Activated T-helper 2 cell treated with anti-CD3 and anti-CD28 coated beads, Interferon-gamma antibody, Interleukin-2, Interleukin-4, amounts not matched to agents 10 μg/mL and 5 μg/mL and 100 μg/mL, durations not matched to agents 14 hours and 24 hours and 36 hours (primary cell): ENCODE measurements at regions of chr11 and their contacts with region 1.

Region 1: DNA sequence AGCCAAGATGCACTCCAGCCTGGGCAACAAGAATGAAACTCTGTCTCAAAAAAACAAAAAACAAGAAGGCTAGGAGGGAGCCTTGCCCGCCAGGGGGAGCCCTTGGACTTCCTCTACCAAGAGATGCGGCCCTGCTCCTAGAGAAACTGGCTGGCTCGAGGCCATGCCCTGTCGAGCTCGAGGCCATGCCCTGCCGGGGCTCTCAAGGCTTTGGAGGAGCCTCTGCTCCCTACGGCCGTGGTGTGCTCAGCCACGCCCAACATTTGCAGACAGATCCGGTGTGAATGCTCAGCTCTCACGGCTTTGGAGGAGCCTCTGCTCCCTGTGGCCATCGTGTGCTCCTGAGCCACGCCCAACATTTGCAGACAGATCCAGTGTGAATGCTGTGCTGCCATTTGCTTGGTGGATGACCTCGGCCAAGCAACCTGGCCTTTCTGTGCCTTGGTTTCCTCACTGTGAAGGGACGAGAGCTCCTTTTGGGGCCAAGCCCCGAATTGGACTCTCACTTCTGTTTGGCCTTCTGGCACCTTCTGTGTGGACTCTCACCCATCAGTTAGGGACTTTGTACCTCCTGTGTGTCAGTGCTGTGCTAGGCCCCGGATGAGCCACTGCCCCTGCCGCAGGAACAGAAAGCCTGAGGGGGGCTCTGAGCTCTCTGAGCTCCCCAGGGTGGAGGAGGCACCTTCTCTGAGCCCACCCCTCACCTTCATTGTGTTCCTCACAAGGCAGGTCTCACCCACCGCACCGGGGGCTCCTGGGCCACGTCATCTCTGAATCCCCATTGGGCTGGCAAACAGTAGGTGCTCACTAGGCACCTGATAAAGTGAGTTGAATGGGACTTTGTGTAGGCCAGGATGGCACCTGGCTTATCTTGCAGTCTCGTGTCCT is 14.1 kb downstream of the C11orf24 start:
- DNase-seq: peak; percentile 84
- H3K4me3 Mint-ChIP-seq: no peak overlapping the region
- H3K27ac Mint-ChIP-seq: no peak overlapping the region
- H3K4me1 Mint-ChIP-seq: peaks cover 1% of the 10 kb centered on the region
- H3K27me3 Mint-ChIP-seq: no peaks in the 10 kb centered on the region

Region 2: DNA sequence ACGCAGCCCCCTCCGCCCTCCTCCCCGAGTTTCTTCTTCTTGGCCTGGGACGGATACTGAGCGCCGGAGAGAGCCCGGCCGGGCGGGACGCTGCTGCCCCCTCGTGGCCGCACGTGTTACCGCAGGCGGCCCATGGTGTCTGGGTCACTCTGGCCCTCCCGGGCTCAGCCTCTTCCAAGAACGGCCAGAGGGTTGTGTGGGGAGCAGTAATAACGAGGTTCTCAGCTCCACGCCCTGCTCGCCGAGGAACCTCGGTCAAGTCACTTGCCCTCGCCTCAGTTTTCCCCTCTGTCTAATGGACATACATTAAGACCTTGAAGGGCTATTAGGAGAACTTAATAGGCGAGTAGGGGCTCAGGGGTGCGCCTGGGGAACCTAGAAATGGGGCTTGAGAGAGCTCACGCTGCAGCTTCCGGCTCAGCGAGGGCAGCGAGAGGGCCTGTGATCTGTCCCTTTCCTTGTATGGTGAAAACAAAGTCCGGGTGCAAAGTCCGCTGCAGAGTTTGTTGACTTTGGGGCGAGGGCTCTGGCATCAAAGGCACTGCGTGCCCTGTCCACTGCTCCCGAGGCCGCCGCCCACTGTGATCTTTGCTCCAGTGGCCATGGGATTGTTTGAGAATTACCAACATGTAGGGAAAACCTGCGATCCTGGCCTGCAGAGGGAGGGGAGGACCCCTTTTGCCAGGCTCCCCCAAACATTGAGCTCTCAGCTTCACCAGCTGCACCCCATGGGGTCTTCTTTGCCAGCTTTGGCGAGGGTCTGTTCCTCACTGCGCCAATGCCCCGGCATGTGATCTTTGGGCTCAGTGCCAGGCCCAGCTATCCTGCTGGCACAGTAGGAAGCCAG is 40.3 kb after region 1 on chr11:
- intact Hi-C with region 1: loop called (anchors 1 kb)
- DNase-seq: peak; percentile 54
- H3K4me3 Mint-ChIP-seq: no peak overlapping the region
- H3K27ac Mint-ChIP-seq: no peak overlapping the region
- H3K4me1 Mint-ChIP-seq: no peaks in the 10 kb centered on the region
- H3K27me3 Mint-ChIP-seq: peaks cover 7% of the 10 kb centered on the region

Region 3: DNA sequence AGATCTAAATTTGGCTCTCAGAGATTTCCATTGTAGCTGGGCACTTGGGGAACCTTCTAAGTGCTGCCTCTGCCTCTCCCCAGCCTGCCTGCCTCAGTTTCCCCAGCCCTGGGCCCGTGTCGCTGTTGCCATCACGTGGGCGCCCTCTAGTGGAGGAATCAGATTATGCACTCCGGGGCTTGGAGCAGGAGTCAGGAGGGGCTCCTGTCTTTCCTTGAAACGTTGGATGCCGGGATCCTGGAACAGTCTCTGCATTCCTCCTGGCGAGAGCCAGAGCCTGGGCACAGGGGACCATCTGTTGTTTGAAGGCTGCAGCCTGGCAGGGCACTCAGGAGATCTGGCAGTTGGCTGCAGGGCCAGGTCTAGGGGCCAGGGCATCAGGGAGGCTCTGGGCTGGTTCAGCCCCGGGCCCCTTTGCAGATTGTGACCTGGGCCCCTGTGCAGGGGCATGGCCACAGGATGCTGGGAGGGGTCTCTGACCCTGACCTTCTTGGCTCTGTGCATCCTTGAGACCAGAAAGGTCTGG is 126.3 kb after region 1 on chr11:
- intact Hi-C with region 1: loop called (anchors 1 kb)
- DNase-seq: peak; percentile 50
- H3K4me3 Mint-ChIP-seq: no peak overlapping the region
- H3K27ac Mint-ChIP-seq: no peak overlapping the region
- H3K4me1 Mint-ChIP-seq: peaks cover 20% of the 10 kb centered on the region
- H3K27me3 Mint-ChIP-seq: peaks cover 2% of the 10 kb centered on the region

Region 4: GRCh38 chr11:68447015-68447801 is 189.5 kb after region 1 on chr11:
- intact Hi-C with region 1: loop called (anchors 1 kb)
- DNase-seq: peak; percentile 63
- H3K4me3 Mint-ChIP-seq: no peak overlapping the region
- H3K27ac Mint-ChIP-seq: no peak overlapping the region
- H3K4me1 Mint-ChIP-seq: peaks cover 6% of the 10 kb centered on the region
- H3K27me3 Mint-ChIP-seq: no peaks in the 10 kb centered on the region